Transverse colon (tissue), 4 donors: ENCODE measurements at regions of chr15 and their contacts with region 1.

Region 1: DNA sequence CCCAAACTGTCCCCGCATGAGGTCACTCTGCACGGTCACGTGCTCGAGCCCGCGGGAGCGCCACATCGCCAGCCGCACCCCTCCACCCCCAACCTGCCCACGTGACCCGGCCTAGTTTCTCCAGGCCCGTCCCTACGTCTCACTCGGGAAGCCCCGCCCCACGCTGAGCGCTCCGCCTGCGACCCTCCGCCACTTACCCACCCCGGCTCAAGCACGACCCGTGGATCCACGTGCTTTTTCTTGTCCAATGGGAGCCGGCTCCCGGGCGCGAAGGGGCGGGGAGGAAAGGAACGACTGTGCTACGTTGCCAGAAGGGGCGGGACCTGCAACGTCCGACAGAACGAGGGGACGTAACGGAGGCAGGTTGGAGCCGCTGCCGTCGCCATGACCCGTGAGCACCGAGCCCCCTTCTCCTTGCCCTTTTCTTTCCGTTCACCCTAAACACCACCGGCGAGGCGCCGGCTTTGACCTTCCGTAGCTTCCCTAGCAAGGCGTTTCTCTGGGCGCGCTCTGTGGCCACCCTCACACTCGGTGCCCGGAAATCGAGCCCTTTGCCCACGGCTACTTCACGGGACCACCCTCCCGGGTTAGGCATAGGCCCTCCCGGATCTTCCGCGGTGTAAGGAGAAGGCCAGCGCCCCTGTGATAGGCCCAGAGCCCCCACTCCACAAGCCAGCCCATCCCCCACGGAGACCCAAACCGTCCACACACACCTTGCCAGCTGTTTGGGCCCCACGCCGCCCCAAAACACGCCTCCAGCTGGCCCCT is at the start of gene SERF2:
- DNase-seq: peak; percentile 100
- H3K4me3 ChIP-seq: peak within 1 kb of the TSS; percentile 74 to 94 (median 86)
- H3K27ac ChIP-seq: peak within 1 kb of the TSS; percentile 90 to 99 (median 97)
- H3K4me1 ChIP-seq: peaks cover 27 to 45% (median 35%) of the 10 kb centered on the region in 4 donors
- H3K27me3 ChIP-seq: no peaks in the 10 kb centered on the region
- CTCF ChIP-seq: peak in 1 of 5 experiments; percentile 13
- EP300 ChIP-seq: no peak
- POLR2A ChIP-seq: peak; percentile 100
- total RNA-seq, gene SERF2: 663 to 1,001 (median 825) TPM

Region 2: GRCh38 chr15:43492673-43493601 is 299.2 kb before region 1 on chr15 and contains the start of gene TP53BP1:
- in situ Hi-C with region 1: loop called in 1 of 4 experiments (anchors 25 kb)
- intact Hi-C with region 1: no loop called
- DNase-seq: peak; percentile 98
- H3K4me3 ChIP-seq: peak within 1 kb of the TSS; percentile 29 to 97 (median 82)
- H3K27ac ChIP-seq: peak within 1 kb of the TSS; percentile 83 to 92 (median 90)
- H3K4me1 ChIP-seq: peaks cover 6 to 47% (median 16%) of the 10 kb centered on the region in 4 donors
- H3K27me3 ChIP-seq: no peaks in the 10 kb centered on the region
- CTCF ChIP-seq: no peak
- EP300 ChIP-seq: no peak
- POLR2A ChIP-seq: peak; percentile 48
- total RNA-seq, gene TP53BP1: 25.1 to 40.8 (median 33.7) TPM

Region 3: DNA sequence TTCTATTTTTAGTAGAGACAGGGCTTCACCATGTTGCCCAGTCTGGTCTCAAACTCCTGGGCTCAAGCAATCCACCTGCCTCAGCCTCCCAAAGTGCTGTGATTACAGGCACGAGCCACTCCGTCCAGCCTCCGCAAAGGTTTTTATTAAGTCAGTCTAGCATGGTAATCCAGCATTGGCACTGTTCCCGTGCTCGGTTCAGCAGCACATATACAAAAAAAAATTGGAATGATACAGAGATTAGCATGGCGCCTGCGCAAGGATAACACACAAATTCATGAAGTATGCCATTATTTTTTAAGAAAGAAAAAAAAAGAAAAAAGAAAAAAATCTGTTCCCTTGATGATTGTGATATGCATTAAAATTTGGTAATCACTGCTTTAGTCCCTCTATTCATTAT is 90.0 kb before region 1 on chr15:
- in situ Hi-C with region 1: no loop called
- intact Hi-C with region 1: no loop called
- DNase-seq: no peak
- H3K4me3 ChIP-seq: no peak overlapping the region
- H3K27ac ChIP-seq: no peak overlapping the region
- H3K4me1 ChIP-seq: no peaks in the 10 kb centered on the region
- H3K27me3 ChIP-seq: no peaks in the 10 kb centered on the region
- CTCF ChIP-seq: no peak
- EP300 ChIP-seq: no peak
- POLR2A ChIP-seq: no peak

Region 4: DNA sequence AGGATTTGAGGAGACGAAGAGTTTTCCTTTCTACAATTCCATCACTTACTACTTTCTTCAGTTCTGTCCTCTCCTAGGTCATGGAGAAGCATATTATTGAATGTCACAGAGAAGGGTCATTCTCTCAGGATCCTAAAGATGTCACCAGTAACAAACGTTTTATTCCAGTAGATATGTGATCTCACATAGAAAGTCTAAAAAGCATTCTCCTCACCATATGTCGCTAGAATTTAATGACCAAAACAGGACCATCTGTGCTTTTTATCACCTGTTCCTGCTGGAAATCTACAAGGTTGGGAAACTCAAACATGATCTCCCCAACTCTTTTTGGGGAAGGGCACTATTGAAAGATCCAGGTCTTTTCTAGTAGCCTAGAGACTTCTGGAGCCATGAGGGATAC is 426.9 kb after region 1 on chr15:
- in situ Hi-C with region 1: no loop called
- intact Hi-C with region 1: no loop called
- DNase-seq: no peak
- H3K4me3 ChIP-seq: no peak overlapping the region
- H3K27ac ChIP-seq: no peak overlapping the region
- H3K4me1 ChIP-seq: peaks cover 0 to 6% (median 0%) of the 10 kb centered on the region in 4 donors
- H3K27me3 ChIP-seq: peaks cover 7% of the 10 kb centered on the region
- CTCF ChIP-seq: no peak
- EP300 ChIP-seq: no peak
- POLR2A ChIP-seq: no peak